ENCODE measurements at regions of chr15 and their contacts with region 1.

Region 1: DNA sequence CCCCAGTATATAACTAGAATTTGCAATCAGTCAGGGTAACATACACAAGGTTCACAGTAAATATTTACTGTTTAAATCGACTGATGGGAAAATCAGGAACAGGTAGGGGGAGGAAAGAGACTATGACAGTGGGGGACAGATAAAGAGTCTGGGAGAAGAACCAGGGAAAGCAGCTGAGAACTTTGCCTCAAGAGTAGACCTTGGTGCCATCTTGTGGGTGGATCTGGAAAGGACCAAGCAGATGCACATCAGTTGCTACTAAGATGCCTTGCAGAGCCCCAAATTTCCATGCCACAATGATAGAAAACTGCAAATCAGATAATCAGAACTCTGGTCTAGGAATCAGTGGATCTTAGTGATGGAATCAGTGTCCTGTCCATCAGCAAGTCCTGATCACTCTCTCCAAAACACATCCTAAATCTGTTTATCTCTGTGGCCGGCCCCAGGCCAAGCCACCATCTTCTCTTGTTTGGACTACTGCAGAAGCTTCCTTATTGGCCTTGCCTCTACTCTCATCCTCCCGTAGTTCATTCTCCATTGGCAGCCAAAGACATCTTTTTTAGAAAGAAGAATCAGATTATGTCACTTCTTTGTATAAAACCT is 62.7 kb downstream of the PDE8A start:
- DNase-seq: no peak
- CTCF ChIP-seq: peak; percentile 71

Region 2: GRCh38 chr15:84929744-84930371 is 114.5 kb before region 1 on chr15:
- CTCF ChIA-PET with region 1: interaction called, 16 read pairs
- POLR2A ChIA-PET with region 1: no interaction called
- DNase-seq: no peak
- CTCF ChIP-seq: no peak

Region 3: GRCh38 chr15:84981054-84981710 is 63.2 kb before region 1 on chr15:
- CTCF ChIA-PET with region 1: interaction called, 17 read pairs
- POLR2A ChIA-PET with region 1: no interaction called
- DNase-seq: peak; percentile 99
- CTCF ChIP-seq: no peak

Region 4: GRCh38 chr15:85030301-85031049 is 13.9 kb before region 1 on chr15:
- CTCF ChIA-PET with region 1: interaction called, 78 read pairs
- POLR2A ChIA-PET with region 1: no interaction called
- DNase-seq: no peak
- CTCF ChIP-seq: no peak

Region 5: GRCh38 chr15:85073556-85074194 is 29.3 kb after region 1 on chr15:
- CTCF ChIA-PET with region 1: interaction called, 12 read pairs
- POLR2A ChIA-PET with region 1: no interaction called
- DNase-seq: peak; percentile 57
- CTCF ChIP-seq: no peak

Measured in GM10248 (cell line).